ENCODE measurements at regions of chr1 and their contacts with region 1.

Region 1: GRCh38 chr1:2415801-2416208 is 3.4 kb upstream of the PEX10 start:
- DNase-seq: peak in 2 of 6 donors; percentile 46 to 64
- ATAC-seq: no peak
- H3K4me3 ChIP-seq: no peak overlapping the region
- H3K27ac ChIP-seq: no peak overlapping the region
- H3K4me1 ChIP-seq: peaks cover 6 to 16% (median 13%) of the 10 kb centered on the region in 3 donors
- H3K27me3 ChIP-seq: peaks cover 0 to 11% (median 2%) of the 10 kb centered on the region in 4 donors
- CTCF ChIP-seq: no peak

Region 2: GRCh38 chr1:2545759-2546514 is 130.1 kb after region 1 on chr1:
- intact Hi-C with region 1: loop called in 2 of 3 experiments (anchors 5 kb)
- DNase-seq: peak in 5 of 6 donors; percentile 90 to 96 (median 93)
- ATAC-seq: peak; percentile 66 to 73 (median 70)
- H3K4me3 ChIP-seq: peak overlapping the region; percentile 16 to 67 (median 47)
- H3K27ac ChIP-seq: peak overlapping the region; percentile 73 to 97 (median 84)
- H3K4me1 ChIP-seq: peaks cover 6 to 22% (median 20%) of the 10 kb centered on the region in 3 donors
- H3K27me3 ChIP-seq: no peaks in the 10 kb centered on the region
- CTCF ChIP-seq: no peak

Region 3: DNA sequence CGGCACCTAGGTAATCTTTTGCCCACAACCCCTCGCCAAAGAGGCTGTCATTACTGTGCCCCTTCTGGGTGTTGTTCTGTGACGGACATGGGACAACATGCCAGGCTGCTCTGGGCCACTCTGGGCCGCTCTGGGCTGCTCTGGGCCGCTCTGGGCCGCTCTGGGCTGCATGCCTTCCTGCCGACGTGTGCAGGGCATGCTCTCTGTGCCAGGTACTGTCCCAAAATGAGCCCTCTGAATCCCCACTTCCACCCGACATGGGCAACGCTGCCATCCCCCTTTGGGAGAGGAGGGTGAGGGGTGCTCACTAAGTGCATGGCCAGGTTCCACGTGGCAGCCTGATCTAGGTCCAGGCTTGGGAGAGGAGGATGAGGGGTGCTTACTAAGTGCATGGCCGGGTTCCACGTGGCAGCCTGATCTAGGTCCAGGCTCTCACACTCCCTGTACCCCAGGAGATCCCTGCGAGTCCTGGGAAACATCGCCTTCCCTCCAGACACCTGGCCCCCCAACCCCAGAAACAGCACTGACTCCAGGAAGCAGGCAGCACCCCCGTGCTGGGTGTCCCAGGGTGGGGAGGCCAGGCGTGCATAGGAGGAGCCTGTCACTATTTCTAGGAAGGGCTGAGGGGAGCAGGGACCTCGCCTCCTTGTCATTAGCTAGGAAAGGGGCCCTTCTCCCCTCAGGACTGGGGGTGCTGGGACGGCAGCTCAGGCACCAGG is 369.2 kb after region 1 on chr1:
- intact Hi-C with region 1: loop called in 1 of 3 experiments (anchors 5 kb)
- DNase-seq: no peak
- ATAC-seq: no peak
- H3K4me3 ChIP-seq: no peak overlapping the region
- H3K27ac ChIP-seq: no peak overlapping the region
- H3K4me1 ChIP-seq: no peaks in the 10 kb centered on the region
- H3K27me3 ChIP-seq: peaks cover 0 to 9% (median 4%) of the 10 kb centered on the region in 4 donors
- CTCF ChIP-seq: no peak

Measured in pancreas (tissue), 10 donors.